PC-9 (cell line): ENCODE measurements at regions of chr15 and their contacts with region 1.

Region 1: DNA sequence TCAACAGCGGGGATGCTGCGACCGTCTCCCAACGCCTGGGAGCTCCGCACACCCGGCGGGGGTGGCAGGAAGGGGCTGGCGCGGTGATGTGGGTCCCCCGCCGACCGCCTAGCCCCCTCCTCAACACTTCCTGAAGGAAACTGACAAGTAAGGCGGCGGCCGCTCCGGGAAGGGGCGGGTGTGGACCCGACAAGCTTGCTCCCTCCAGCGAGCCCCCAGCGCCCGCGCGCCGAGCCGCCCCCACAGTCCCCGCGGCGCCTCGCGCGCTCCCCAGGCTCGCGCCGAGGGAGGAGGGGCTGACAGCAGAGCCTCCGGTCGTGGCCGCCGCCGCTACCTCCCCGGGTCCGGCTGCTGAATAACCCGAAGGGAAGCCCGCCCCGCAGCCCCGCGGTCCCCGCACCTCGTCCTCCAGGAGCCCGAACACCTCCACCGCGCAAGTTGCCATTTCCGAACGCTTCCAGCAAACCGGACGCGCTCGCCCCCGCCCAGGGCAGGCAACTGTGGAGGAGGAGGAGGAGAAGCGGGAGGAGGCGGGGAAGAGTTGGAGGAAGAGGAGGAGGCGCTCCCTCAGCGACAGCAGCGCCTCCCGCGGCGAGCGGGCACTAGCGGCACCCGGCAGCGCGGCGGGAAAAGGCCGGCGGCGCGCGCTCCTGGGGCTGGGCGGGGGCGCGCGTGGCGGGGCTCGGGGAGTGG is at the start of gene NEDD4:
- DNase-seq: peak; percentile 52 to 87
- H3K4me3 ChIP-seq: peak within 1 kb of the TSS; percentile 81
- H3K27ac ChIP-seq: peak within 1 kb of the TSS; percentile 26; the same call in 1 of the 2 replicates
- H3K4me1 ChIP-seq: peaks cover 14% of the 10 kb centered on the region
- H3K27me3 ChIP-seq: no peaks in the 10 kb centered on the region
- CTCF ChIP-seq: no peak
- total RNA-seq, gene NEDD4: 17.8 and 24.5 TPM in 2 replicates

Region 2: DNA sequence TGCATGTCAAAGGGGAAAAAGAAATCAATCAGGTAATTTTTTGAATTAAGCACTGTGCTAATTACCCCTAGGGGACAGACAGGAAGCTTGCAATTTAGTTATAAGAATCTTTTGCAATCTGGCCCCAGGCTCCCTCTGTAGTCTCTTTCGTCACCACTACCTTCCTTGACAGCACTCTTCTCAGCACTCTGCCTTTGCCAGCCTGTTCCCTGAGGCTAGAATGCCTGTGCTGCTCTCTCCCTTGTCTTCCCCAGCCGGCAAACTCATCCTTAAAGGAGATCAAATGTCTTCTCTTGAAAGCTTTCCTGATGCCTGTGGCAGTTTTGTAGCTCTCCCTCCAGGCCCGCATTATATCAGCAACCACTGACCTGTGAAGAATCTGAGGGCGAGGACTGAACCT is 217.9 kb before region 1 on chr15:
- CTCF ChIA-PET with region 1: no interaction called
- POLR2A ChIA-PET with region 1: no interaction called
- intact Hi-C with region 1: no loop called
- DNase-seq: peak; percentile 68 to 87
- H3K4me3 ChIP-seq: no peak overlapping the region
- H3K27ac ChIP-seq: 0 out of 2 replicates have a peak overlapping the region, but pooled peaks have one; percentile 35
- H3K4me1 ChIP-seq: peaks cover 15% of the 10 kb centered on the region
- H3K27me3 ChIP-seq: no peaks in the 10 kb centered on the region
- CTCF ChIP-seq: no peak

Region 3: GRCh38 chr15:55917881-55918296 is 75.4 kb before region 1 on chr15:
- CTCF ChIA-PET with region 1: no interaction called
- POLR2A ChIA-PET with region 1: no interaction called
- intact Hi-C with region 1: no loop called
- DNase-seq: peak; percentile 23 to 84
- H3K4me3 ChIP-seq: no peak overlapping the region
- H3K27ac ChIP-seq: peak overlapping the region; percentile 58
- H3K4me1 ChIP-seq: peaks cover 9% of the 10 kb centered on the region
- H3K27me3 ChIP-seq: no peaks in the 10 kb centered on the region
- CTCF ChIP-seq: peak; percentile 68

Region 4: DNA sequence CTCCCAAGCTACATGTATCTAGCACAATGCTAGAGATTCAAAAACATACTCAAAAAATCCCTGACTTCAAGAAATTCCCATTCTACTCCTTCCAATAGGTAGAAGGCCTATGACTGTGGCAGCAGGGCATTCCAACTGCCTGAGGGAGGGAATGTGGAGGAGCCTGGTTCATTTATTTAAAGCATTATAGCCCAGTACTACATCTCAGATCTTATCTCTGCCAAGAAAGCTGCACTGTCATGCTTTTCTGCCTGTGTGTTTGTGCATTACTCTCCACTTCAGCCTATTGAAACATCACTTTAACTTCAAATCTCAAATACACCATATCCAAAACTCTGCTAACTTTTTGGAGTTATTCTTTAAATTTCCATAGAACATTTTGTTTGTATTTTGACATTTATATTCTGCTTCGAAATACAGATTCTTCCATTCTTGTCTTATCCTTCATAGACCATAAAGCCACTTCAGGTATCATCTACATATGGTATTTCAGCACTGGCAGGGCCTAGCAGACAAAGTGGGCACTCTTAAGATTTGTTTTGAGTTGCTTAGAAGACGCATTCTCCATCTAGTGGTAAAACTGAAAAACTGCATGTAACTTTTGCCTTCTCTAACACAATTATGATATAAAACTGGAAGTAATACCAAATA is 59.3 kb after region 1 on chr15:
- CTCF ChIA-PET with region 1: no interaction called
- POLR2A ChIA-PET with region 1: interaction called, 10 read pairs
- intact Hi-C with region 1: loop called (anchors 2 kb)
- DNase-seq: peak in 1 of 2 experiments; percentile 41
- H3K4me3 ChIP-seq: no peak overlapping the region
- H3K27ac ChIP-seq: peak overlapping the region; percentile 46
- H3K4me1 ChIP-seq: no peaks in the 10 kb centered on the region; the same call in 1 of the 2 replicates
- H3K27me3 ChIP-seq: no peaks in the 10 kb centered on the region
- CTCF ChIP-seq: peak; percentile 80